Activated naive CD4-positive, alpha-beta T cell treated with anti-CD3 and anti-CD28 coated beads for 36 hours (primary cell): ENCODE measurements at regions of chr5 and their contacts with region 1.

Region 1: GRCh38 chr5:138503487-138504270 is 38.4 kb downstream of the EGR1 start:
- DNase-seq: peak; percentile 53
- H3K4me3 Mint-ChIP-seq: no peak overlapping the region
- H3K27ac Mint-ChIP-seq: no peak overlapping the region
- H3K4me1 Mint-ChIP-seq: no peaks in the 10 kb centered on the region
- H3K27me3 Mint-ChIP-seq: no peaks in the 10 kb centered on the region

Region 2: DNA sequence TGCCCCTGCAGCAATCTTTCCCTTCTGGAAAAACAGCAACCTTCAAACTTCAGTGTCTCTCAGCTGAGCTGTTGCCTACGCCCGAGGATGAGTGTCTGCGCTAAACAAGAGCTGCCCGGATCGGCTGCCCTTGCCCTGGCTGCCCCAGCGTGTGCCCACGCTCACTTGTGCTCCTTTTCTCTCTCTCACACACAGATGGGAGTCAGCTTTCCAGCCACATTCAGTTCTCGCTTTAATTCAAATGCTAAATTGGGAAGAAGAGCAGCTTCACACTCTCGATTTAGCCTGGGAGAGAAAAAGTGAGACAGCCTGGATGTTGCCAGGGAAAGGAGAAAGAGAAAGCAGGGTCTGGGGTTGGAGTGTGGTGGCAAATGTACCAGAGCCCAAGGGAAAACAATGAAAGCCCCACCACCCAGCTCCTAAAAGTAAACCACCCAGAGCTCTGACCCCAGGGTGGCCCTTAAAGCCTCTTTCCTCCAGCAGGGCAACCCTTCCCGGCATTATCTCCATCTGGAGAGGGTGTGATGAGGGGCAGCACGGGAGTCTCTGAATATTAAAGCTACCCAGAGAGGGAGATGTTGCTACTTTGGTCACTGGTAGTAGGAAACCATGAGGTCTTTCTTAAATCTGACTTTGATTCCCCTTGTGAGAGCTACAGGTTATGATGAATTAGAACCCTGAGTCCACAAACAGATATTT is 48.3 kb before region 1 on chr5:
- CTCF ChIA-PET with region 1: interaction called, 104 read pairs
- intact Hi-C with region 1: loop called (anchors 1 kb)
- DNase-seq: no peak
- H3K4me3 Mint-ChIP-seq: no peak overlapping the region
- H3K27ac Mint-ChIP-seq: no peak overlapping the region
- H3K4me1 Mint-ChIP-seq: peaks cover 29% of the 10 kb centered on the region
- H3K27me3 Mint-ChIP-seq: no peaks in the 10 kb centered on the region